GM12878 (cell line): ENCODE measurements at regions of chr16 and their contacts with region 1.

Region 1: DNA sequence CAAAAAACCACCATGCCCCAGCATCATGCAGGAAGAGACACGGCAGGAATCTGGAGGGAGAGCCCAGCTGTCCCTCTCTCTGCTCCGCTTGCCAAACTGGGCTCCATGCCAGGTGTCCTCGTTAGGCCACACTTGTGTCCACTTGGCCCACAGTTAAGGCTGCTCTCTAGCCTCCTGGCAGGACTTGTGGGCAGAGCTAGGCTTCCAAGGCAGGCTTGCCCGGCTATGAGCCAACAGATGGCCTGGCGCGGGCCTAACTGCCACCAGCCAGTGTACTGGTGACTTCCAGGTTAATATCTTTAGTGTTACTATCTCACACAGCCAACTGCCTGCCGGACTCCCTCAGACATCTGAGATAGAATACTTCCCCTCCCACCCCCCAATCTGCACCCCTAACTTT is 10.6 kb downstream of the ATP6V0D1 start:
- DNase-seq: no peak
- ATAC-seq: no peak
- H3K4me3 ChIP-seq: no peak overlapping the region
- H3K27ac ChIP-seq: no peak overlapping the region
- H3K4me1 ChIP-seq: peaks cover 15% of the 10 kb centered on the region
- H3K27me3 ChIP-seq: no peaks in the 10 kb centered on the region
- CTCF ChIP-seq: no peak
- EP300 ChIP-seq: no peak
- POLR2A ChIP-seq: no peak
- RAD21 ChIP-seq: no peak

Region 2: GRCh38 chr16:67349172-67349571 is 121.2 kb before region 1 on chr16:
- CTCF ChIA-PET with region 1: interaction called, 5 read pairs
- POLR2A ChIA-PET with region 1: no interaction called
- RAD21 ChIA-PET with region 1: interaction called, 3 read pairs
- SMC1A ChIA-PET with region 1: no interaction called
- in situ Hi-C with region 1: no loop called
- intact Hi-C with region 1: loop called (anchors 5 kb)
- DNase-seq: no peak
- ATAC-seq: peak; percentile 83
- H3K4me3 ChIP-seq: no peak overlapping the region
- H3K27ac ChIP-seq: no peak overlapping the region
- H3K4me1 ChIP-seq: no peaks in the 10 kb centered on the region
- H3K27me3 ChIP-seq: no peaks in the 10 kb centered on the region
- CTCF ChIP-seq: peak in 2 of 3 experiments; percentile 34 to 38; a peak in 3 of 6 replicates
- EP300 ChIP-seq: no peak
- POLR2A ChIP-seq: no peak
- RAD21 ChIP-seq: peak; percentile 54; the same call in 1 of the 2 replicates